ENCODE measurements at regions of chr1 and their contacts with region 1.

Region 1: DNA sequence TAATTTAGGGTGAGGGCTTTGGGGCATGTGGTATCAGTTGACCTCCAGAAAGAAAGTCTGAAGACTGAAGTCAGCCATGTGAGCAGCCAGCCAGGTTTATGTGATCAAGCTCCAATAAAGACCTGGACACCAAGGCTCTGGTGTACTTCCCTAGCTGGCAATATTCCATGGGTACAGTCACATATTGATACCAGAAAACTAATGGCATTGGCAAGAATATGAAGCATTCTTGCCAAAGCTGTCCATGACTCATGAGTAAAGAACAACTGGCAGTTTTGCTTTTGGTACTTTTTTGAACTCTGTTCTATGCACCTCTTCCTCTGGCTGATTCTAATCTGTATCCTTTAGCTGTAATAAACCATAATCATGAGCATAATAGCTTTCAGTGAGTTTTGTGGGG is 415.3 kb upstream of the CAMK1G start:
- DNase-seq: no peak
- H3K4me3 ChIP-seq: no peak overlapping the region
- H3K27ac ChIP-seq: no peak overlapping the region
- H3K4me1 ChIP-seq: no peaks in the 10 kb centered on the region
- H3K27me3 ChIP-seq: no peaks in the 10 kb centered on the region
- CTCF ChIP-seq: no peak

Region 2: GRCh38 chr1:209123601-209124000 is 44.6 kb before region 1 on chr1:
- CTCF ChIA-PET with region 1: no interaction called
- POLR2A ChIA-PET with region 1: no interaction called
- intact Hi-C with region 1: no loop called
- DNase-seq: no peak
- H3K4me3 ChIP-seq: no peak overlapping the region
- H3K27ac ChIP-seq: no peak overlapping the region
- H3K4me1 ChIP-seq: no peaks in the 10 kb centered on the region
- H3K27me3 ChIP-seq: peaks cover 13% of the 10 kb centered on the region
- CTCF ChIP-seq: no peak

Region 3: GRCh38 chr1:209219791-209220524 is 51.8 kb after region 1 on chr1:
- CTCF ChIA-PET with region 1: no interaction called
- POLR2A ChIA-PET with region 1: no interaction called
- intact Hi-C with region 1: loop called (anchors 5 kb)
- DNase-seq: no peak
- H3K4me3 ChIP-seq: no peak overlapping the region
- H3K27ac ChIP-seq: no peak overlapping the region
- H3K4me1 ChIP-seq: no peaks in the 10 kb centered on the region
- H3K27me3 ChIP-seq: peaks cover 42% of the 10 kb centered on the region
- CTCF ChIP-seq: no peak

Region 4: GRCh38 chr1:209473025-209473424 is 304.8 kb after region 1 on chr1:
- CTCF ChIA-PET with region 1: no interaction called
- POLR2A ChIA-PET with region 1: no interaction called
- intact Hi-C with region 1: no loop called
- DNase-seq: no peak
- H3K4me3 ChIP-seq: no peak overlapping the region
- H3K27ac ChIP-seq: no peak overlapping the region
- H3K4me1 ChIP-seq: no peaks in the 10 kb centered on the region
- H3K27me3 ChIP-seq: no peaks in the 10 kb centered on the region
- CTCF ChIP-seq: no peak